MCF 10A (cell line): ENCODE measurements at regions of chr1 and their contacts with region 1.

Region 1: DNA sequence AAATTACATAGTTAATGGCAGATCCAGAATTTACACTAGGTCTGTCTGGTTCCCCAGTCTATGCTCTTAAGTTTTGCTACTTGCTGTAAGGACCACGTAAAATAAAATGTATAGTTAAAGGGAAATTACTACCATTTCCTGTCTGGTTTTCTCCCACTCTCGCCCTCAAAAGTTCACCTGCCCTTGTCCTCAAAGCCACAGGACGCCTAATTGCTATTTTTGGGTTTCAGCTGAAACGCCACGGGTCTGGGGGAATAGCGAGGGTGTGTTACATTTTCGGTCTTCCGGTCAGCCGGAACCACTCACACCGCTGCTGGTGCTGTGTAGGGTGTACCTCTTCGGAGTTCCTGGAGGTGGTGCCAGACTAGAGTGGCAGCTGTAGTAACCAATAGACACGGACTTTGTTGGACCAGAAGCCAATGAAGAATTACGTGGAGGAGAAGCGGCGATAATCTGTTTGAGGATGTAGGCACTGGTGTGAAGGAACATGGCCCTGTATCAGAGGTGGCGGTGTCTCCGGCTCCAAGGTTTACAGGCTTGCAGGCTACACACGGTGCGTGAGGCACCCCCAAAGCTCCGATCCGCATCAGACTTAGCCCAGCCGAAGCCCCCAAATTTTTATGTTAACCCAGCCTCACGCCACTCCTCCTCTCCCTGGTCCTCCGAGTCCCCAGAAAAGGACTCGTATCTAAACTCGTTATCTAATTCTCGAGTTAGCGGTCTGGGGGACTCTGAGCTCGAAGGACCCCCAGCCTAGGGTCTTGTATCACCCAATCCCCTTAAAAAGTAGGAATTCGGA is at the start of gene TARS2:
- DNase-seq: peak; percentile 100
- H3K4me3 Mint-ChIP-seq: peak within 1 kb of the TSS; percentile 99
- H3K27ac Mint-ChIP-seq: peak within 1 kb of the TSS; percentile 93
- H3K4me1 Mint-ChIP-seq: peaks cover 14% of the 10 kb centered on the region
- H3K27me3 Mint-ChIP-seq: no peaks in the 10 kb centered on the region
- CTCF ChIP-seq: no peak
- total RNA-seq, gene TARS2: 43.1 and 65.3 TPM in 2 replicates

Region 2: GRCh38 chr1:150507905-150508854 is 21.0 kb after region 1 on chr1 and contains the start of gene ECM1:
- CTCF ChIA-PET with region 1: interaction called, 6 read pairs
- POLR2A ChIA-PET with region 1: interaction called, 32 read pairs
- intact Hi-C with region 1: no loop called
- DNase-seq: peak; percentile 81
- H3K4me3 Mint-ChIP-seq: peak within 1 kb of the TSS; percentile 13
- H3K27ac Mint-ChIP-seq: peak within 1 kb of the TSS; percentile 86
- H3K4me1 Mint-ChIP-seq: peaks cover 11% of the 10 kb centered on the region
- H3K27me3 Mint-ChIP-seq: no peaks in the 10 kb centered on the region
- CTCF ChIP-seq: no peak
- total RNA-seq, gene ECM1: 1.7 and 3.2 TPM in 2 replicates

Region 3: GRCh38 chr1:150515328-150516048 is 28.3 kb after region 1 on chr1 and contains the start of gene FALEC:
- CTCF ChIA-PET with region 1: interaction called, 6 read pairs
- POLR2A ChIA-PET with region 1: interaction called, 32 read pairs
- intact Hi-C with region 1: loop called (anchors 5 kb)
- DNase-seq: peak; percentile 98
- H3K4me3 Mint-ChIP-seq: peak within 1 kb of the TSS; percentile 69
- H3K27ac Mint-ChIP-seq: peak within 1 kb of the TSS; percentile 36
- H3K4me1 Mint-ChIP-seq: peaks cover 10% of the 10 kb centered on the region
- H3K27me3 Mint-ChIP-seq: no peaks in the 10 kb centered on the region
- CTCF ChIP-seq: no peak
- total RNA-seq, gene FALEC: not detected in 2 replicates